OCI-LY7 (cell line): ENCODE measurements at regions of chr13 and their contacts with region 1.

Region 1: GRCh38 chr13:26011996-26012821 is 39.6 kb downstream of the SHISA2 start:
- DNase-seq: no peak
- H3K4me3 ChIP-seq: no peak overlapping the region
- H3K27ac ChIP-seq: no peak overlapping the region
- H3K4me1 ChIP-seq: no peaks in the 10 kb centered on the region
- CTCF ChIP-seq: no peak

Region 2: DNA sequence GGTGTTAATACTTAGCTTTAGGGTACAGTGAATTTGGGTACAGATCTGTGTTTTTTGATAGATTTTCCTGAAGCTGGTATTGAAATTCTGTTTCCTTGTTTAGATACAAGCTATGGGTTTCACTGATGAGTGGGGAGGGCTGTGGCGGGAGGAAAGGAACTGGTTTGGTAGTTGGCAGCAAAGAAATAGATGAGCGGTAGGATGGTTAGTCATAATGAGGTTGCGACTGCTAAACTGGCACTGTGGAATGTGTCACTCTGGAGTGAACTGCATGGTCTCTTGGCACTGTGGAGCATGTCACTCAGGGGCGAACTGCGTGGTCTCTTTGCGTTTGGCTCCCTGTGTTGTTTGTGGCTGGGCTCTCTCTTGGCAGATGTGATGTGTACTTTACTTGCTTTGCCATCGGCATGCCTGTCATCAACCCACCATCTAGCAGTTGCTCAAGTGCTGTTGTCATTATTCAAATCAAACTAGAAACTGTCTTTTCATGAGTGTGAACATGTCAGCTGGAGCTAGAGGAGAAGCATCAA is 558.3 kb before region 1 on chr13:
- CTCF ChIA-PET with region 1: interaction called, 10 read pairs
- POLR2A ChIA-PET with region 1: no interaction called
- intact Hi-C with region 1: no loop called
- DNase-seq: no peak
- H3K4me3 ChIP-seq: no peak overlapping the region
- H3K27ac ChIP-seq: no peak overlapping the region
- H3K4me1 ChIP-seq: no peaks in the 10 kb centered on the region
- CTCF ChIP-seq: no peak